Gastrocnemius medialis (tissue), 4 donors: ENCODE measurements at regions of chr9 and their contacts with region 1.

Region 1: DNA sequence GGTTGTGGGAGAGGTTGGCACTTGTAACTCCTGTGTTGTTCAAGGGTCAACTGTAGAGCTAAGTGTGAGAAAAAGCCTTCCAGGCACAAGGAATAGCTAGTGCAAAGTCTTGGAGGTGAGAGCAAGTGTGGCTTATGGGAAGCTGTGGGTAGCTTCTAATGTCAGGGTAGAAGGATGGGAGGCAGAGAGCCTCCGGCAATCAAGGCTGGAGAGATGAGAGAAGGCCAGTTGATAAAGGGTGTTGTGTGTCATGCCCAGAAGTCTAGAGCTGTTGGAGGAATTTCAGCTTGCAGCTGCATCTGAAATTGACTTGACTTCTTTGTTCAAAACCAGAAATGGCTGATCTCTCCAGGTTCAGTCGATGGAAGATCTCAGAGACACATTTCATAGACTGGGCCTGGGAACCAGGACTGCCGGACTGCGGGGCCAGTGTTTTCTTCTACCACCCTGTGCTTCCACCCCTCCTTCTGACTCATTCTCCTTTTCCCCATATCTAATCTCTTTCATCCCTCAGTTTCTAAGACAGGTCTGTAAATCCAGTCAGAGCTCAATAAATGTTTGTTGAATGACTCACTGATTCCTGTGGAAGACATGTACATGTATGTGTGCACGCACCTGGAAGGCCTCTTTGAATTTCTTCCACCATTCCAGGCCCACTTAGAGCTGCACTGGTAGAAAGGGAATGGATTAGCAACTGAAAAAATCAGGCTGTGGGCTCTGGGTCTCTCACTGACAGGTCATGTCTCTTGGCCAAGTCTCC is 67.8 kb upstream of the KLF4 start:
- DNase-seq: no peak
- ATAC-seq: no peak
- H3K4me3 ChIP-seq: no peak overlapping the region
- H3K27ac ChIP-seq: no peak overlapping the region
- H3K4me1 ChIP-seq: no peaks in the 10 kb centered on the region
- H3K27me3 ChIP-seq: no peaks in the 10 kb centered on the region
- CTCF ChIP-seq: no peak
- POLR2A ChIP-seq: no peak

Region 2: GRCh38 chr9:107612136-107612535 is 54.7 kb after region 1 on chr9:
- in situ Hi-C with region 1: no loop called
- intact Hi-C with region 1: no loop called
- DNase-seq: peak; percentile 53 to 73
- ATAC-seq: peak; percentile 63 to 84
- H3K4me3 ChIP-seq: no peak overlapping the region
- H3K27ac ChIP-seq: no peak overlapping the region
- H3K4me1 ChIP-seq: no peaks in the 10 kb centered on the region
- H3K27me3 ChIP-seq: no peaks in the 10 kb centered on the region
- CTCF ChIP-seq: no peak
- POLR2A ChIP-seq: no peak

Region 3: DNA sequence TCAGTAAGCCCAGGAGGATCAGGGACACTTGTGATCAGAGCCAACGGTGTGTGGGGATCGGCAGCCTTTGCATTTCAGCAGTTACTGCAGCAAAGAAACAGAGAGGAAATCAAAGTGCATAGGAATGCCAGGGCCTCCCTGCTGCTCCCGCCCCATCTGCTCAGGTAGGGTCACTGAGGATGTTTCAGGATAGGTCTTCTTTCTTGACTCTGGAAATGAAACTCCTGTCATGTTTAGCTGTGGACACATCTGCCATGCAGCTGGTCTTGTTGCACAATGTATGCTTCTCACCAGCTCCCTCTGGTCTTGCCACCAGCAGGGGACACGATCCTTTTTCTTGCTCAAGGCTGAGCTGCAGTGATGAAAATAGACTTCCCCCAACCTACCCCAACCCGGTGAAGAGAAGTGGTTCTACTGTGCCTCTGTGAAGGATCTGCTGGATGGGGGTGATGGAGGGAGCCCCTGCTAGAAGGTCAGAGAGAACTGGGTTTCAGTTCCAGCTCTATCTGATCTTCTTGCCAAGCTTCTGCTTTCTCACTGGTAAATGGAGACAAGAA is 117.4 kb after region 1 on chr9:
- in situ Hi-C with region 1: loop called in 1 of 4 experiments (anchors 25 kb)
- intact Hi-C with region 1: no loop called
- DNase-seq: peak; percentile 28 to 54
- ATAC-seq: peak; percentile 66 to 87
- H3K4me3 ChIP-seq: no peak overlapping the region
- H3K27ac ChIP-seq: no peak overlapping the region
- H3K4me1 ChIP-seq: no peaks in the 10 kb centered on the region
- H3K27me3 ChIP-seq: no peaks in the 10 kb centered on the region
- CTCF ChIP-seq: no peak
- POLR2A ChIP-seq: no peak